OCI-LY7 (cell line): ENCODE measurements at regions of chr11 and their contacts with region 1.

Region 1: GRCh38 chr11:18540207-18541009 is 13.7 kb upstream of the TSG101 start:
- DNase-seq: peak; percentile 65
- H3K4me3 ChIP-seq: no peak overlapping the region
- H3K27ac ChIP-seq: no peak overlapping the region
- H3K4me1 ChIP-seq: peaks cover 7% of the 10 kb centered on the region
- CTCF ChIP-seq: peak; percentile 93

Region 2: GRCh38 chr11:18203723-18204122 is 336.7 kb before region 1 on chr11:
- CTCF ChIA-PET with region 1: no interaction called
- POLR2A ChIA-PET with region 1: no interaction called
- intact Hi-C with region 1: no loop called
- DNase-seq: no peak
- H3K4me3 ChIP-seq: no peak overlapping the region
- H3K27ac ChIP-seq: no peak overlapping the region
- H3K4me1 ChIP-seq: no peaks in the 10 kb centered on the region
- CTCF ChIP-seq: peak; percentile 61

Region 3: GRCh38 chr11:18650859-18651557 is 110.6 kb after region 1 on chr11:
- CTCF ChIA-PET with region 1: no interaction called
- POLR2A ChIA-PET with region 1: no interaction called
- intact Hi-C with region 1: loop called (anchors 2 kb)
- DNase-seq: peak; percentile 60
- H3K4me3 ChIP-seq: no peak overlapping the region
- H3K27ac ChIP-seq: no peak overlapping the region
- H3K4me1 ChIP-seq: no peaks in the 10 kb centered on the region
- CTCF ChIP-seq: peak; percentile 86

Region 4: DNA sequence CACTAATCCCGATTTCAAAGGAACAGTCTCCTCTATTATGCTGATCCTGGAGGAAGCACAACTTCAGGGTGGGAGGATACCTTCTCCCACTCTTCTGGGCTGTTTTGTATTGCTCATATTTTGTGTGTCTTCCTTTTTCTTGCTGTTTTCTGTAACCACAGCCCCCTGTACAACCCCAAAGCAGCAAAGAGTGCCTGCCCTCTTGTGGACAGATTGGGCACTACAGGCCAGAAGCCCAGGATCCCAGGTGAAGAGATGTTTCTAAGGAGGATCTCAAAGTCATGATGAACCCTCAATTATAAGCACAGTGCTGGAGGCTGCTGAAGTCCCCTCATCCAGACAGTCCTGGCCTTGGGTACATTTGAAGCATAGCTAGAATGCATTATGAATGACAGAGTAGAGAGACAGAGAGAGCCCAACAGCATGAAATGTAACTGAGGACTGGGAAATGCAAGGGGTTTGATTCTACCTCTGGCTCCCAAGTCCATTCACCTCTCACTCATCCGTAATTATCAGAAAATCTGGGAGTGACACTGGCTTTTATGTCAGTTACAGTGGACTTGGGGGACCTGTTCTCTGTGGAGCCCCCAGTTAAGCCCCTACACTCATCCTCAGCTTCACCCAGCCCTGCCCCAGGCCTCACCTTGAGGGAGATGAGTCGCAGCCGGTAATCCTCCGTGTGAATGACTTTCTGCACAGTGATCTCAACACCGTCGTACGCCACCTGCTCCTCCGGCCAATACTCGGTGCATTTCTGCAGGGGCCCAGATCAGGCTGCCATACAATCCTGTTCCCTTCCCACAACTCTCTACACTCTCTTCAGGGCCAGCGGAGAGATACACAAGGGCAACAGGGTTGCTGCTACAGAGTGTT is 191.8 kb after region 1 on chr11:
- CTCF ChIA-PET with region 1: interaction called, 3 read pairs
- POLR2A ChIA-PET with region 1: no interaction called
- intact Hi-C with region 1: loop called (anchors 1 kb)
- DNase-seq: peak; percentile 67
- H3K4me3 ChIP-seq: no peak overlapping the region
- H3K27ac ChIP-seq: no peak overlapping the region
- H3K4me1 ChIP-seq: peaks cover 13% of the 10 kb centered on the region
- CTCF ChIP-seq: peak; percentile 99

Region 5: DNA sequence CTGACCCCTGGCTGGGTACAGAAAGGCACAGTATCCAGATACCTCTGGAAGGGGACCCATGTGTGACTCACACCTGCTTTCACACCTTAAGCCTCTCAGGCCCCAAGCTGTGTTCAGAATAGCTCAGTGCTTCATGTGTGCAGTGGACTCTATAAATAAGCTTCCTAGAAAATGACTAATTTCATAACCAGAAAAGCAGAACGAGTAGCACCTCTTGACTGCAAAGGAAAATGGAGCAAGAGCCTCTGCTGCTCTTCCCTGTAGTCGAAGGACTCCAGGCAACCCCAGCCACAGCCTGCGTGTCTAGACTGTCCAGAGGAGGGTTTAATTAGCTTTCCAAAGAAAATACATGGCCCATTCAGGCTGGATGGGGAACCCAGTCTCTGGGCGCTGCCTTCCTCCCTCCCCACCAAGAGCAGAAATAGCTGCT is 228.1 kb after region 1 on chr11:
- CTCF ChIA-PET with region 1: interaction called, 4 read pairs
- POLR2A ChIA-PET with region 1: no interaction called
- intact Hi-C with region 1: loop called (anchors 10 kb)
- DNase-seq: peak; percentile 16
- H3K4me3 ChIP-seq: no peak overlapping the region
- H3K27ac ChIP-seq: no peak overlapping the region
- H3K4me1 ChIP-seq: peaks cover 19% of the 10 kb centered on the region
- CTCF ChIP-seq: no peak